Heart left ventricle (tissue), 16 donors: ENCODE measurements at regions of chr2 and their contacts with region 1.

Region 1: GRCh38 chr2:9630749-9631483 is at the start of gene YWHAQ:
- DNase-seq: peak; percentile 99
- ATAC-seq: peak; percentile 95 to 98 (median 96)
- H3K4me3 ChIP-seq: peak within 1 kb of the TSS; percentile 41 to 94 (median 79)
- H3K27ac ChIP-seq: peak within 1 kb of the TSS; percentile 72 to 99 (median 96)
- H3K4me1 ChIP-seq: peaks cover 0 to 60% (median 49%) of the 10 kb centered on the region in 12 donors
- H3K27me3 ChIP-seq: no peaks in the 10 kb centered on the region
- CTCF ChIP-seq: no peak
- POLR2A ChIP-seq: peak; percentile 89 to 98
- total RNA-seq, gene YWHAQ: 169 to 310 (median 213) TPM

Region 2: GRCh38 chr2:9555297-9556141 is 75.4 kb before region 1 on chr2 and contains the start of gene ADAM17:
- intact Hi-C with region 1: loop called in 7 of 10 experiments (anchors 2 to 10 kb)
- DNase-seq: peak; percentile 97 to 99 (median 98)
- ATAC-seq: peak; percentile 89 to 98 (median 96)
- H3K4me3 ChIP-seq: peak within 1 kb of the TSS; percentile 53 to 98 (median 90)
- H3K27ac ChIP-seq: peak within 1 kb of the TSS; percentile 98 to 100 (median 99)
- H3K4me1 ChIP-seq: peaks cover 11 to 60% (median 40%) of the 10 kb centered on the region in 12 donors
- H3K27me3 ChIP-seq: no peaks in the 10 kb centered on the region
- CTCF ChIP-seq: peak; percentile 24 to 71 (median 46)
- POLR2A ChIP-seq: peak; percentile 41 to 87
- total RNA-seq, gene ADAM17: 8.9 to 22.4 (median 15.1) TPM

Region 3: GRCh38 chr2:9693211-9693520 is 62.2 kb after region 1 on chr2:
- intact Hi-C with region 1: loop called in 4 of 10 experiments (anchors 2 to 5 kb)
- DNase-seq: peak; percentile 68 to 86 (median 71)
- ATAC-seq: peak; percentile 95 to 97 (median 96)
- H3K4me3 ChIP-seq: peak overlapping the region in 3 of 12 donors; percentile 17 to 27 (median 19)
- H3K27ac ChIP-seq: peak overlapping the region in 11 of 12 donors; percentile 46 to 88 (median 79)
- H3K4me1 ChIP-seq: peaks cover 0 to 28% (median 17%) of the 10 kb centered on the region in 12 donors
- H3K27me3 ChIP-seq: no peaks in the 10 kb centered on the region
- CTCF ChIP-seq: no peak
- POLR2A ChIP-seq: no peak

Region 4: GRCh38 chr2:9757501-9758264 is 126.8 kb after region 1 on chr2:
- intact Hi-C with region 1: loop called in 6 of 10 experiments (anchors 5 to 10 kb)
- DNase-seq: peak; percentile 71 to 79 (median 78)
- ATAC-seq: peak; percentile 51 to 88 (median 82)
- H3K4me3 ChIP-seq: peak overlapping the region in 11 of 12 donors; percentile 5 to 50 (median 37)
- H3K27ac ChIP-seq: peak overlapping the region in 11 of 12 donors; percentile 28 to 94 (median 73)
- H3K4me1 ChIP-seq: peaks cover 0 to 76% (median 50%) of the 10 kb centered on the region in 12 donors
- H3K27me3 ChIP-seq: no peaks in the 10 kb centered on the region
- CTCF ChIP-seq: no peak
- POLR2A ChIP-seq: peak in 1 of 2 donors; percentile 23

Region 5: GRCh38 chr2:10043906-10044601 is 413.1 kb after region 1 on chr2:
- intact Hi-C with region 1: loop called in 1 of 10 experiments (anchors 10 kb)
- DNase-seq: peak; percentile 99
- ATAC-seq: peak; percentile 48 to 83 (median 78)
- H3K4me3 ChIP-seq: peak overlapping the region; percentile 38 to 93 (median 70)
- H3K27ac ChIP-seq: peak overlapping the region; percentile 93 to 100 (median 97)
- H3K4me1 ChIP-seq: peaks cover 15 to 82% (median 64%) of the 10 kb centered on the region in 12 donors
- H3K27me3 ChIP-seq: no peaks in the 10 kb centered on the region
- CTCF ChIP-seq: no peak
- POLR2A ChIP-seq: peak in 1 of 2 donors; percentile 18